ENCODE measurements at regions of chr4 and their contacts with region 1.

Region 1: DNA sequence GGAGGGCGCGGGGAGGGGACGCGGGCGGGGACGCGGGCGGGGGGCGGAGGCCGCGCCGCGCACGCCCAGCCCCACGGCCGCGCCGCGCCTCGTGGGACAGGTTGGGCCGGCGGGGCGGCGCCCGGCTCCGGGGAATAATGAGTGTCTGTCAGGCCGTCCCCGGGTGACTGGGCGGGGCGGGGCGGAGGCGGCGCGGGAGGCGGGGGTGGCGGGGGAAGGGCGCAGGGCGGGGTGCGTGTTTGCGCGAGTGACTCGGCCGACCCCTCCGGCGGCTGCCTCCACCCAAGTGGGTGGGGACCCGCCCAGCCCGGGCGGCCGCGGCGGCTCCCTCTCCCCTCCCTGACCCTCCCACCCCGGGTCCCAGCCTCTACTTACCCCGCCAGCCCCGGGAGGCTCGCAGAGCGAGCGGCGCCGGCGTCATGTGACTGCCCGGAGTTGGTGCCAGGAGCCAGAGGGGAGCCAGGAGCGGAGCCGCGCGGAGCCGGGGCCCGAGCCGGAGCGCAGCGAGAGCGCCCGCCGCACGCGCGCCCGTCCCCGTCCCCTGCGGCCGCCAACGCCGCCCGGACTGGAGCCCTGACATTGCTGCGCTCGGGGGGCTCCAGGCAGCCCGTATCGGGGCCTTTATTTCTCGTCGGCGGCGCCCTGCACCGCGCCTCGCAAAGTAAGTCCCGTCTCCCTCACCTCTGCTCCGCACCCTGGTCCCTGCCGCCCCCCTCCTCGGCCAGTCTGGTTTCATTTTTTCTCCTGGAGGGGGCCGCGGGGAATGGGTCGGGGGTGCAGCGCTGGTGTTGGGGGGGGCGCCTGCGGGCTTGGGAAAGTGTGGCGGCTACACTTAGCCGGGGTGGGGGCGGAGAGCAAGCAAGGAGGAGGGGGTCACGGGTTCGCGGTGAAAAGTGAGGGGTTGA is at the start of gene KLF3:
- DNase-seq: peak; percentile 90 to 96 (median 93)
- ATAC-seq: peak; percentile 70
- H3K4me3 ChIP-seq: peak within 1 kb of the TSS; percentile 84 to 89
- H3K4me3 Mint-ChIP-seq: peak within 1 kb of the TSS; percentile 99
- H3K27ac ChIP-seq: peak within 1 kb of the TSS; percentile 90 to 93
- H3K27ac Mint-ChIP-seq: peak within 1 kb of the TSS; percentile 98
- H3K4me1 ChIP-seq: peaks cover 61% of the 10 kb centered on the region
- H3K4me1 Mint-ChIP-seq: peaks cover 69% of the 10 kb centered on the region
- H3K27me3 ChIP-seq: no peaks in the 10 kb centered on the region
- H3K27me3 Mint-ChIP-seq: no peaks in the 10 kb centered on the region
- CTCF ChIP-seq: no peak
- total RNA-seq, gene KLF3: 181 to 194 TPM

Region 2: GRCh38 chr4:38132107-38132673 is 531.9 kb before region 1 on chr4:
- CTCF ChIA-PET with region 1: no interaction called
- POLR2A ChIA-PET with region 1: no interaction called
- intact Hi-C with region 1: loop called (anchors 5 kb)
- DNase-seq: peak; percentile 30 to 94 (median 66)
- ATAC-seq: peak; percentile 72
- H3K4me3 ChIP-seq: no peak overlapping the region
- H3K4me3 Mint-ChIP-seq: peak overlapping the region; percentile 17
- H3K27ac ChIP-seq: peak overlapping the region; percentile 25 to 66
- H3K27ac Mint-ChIP-seq: peak overlapping the region; percentile 93
- H3K4me1 ChIP-seq: peaks cover 53% of the 10 kb centered on the region
- H3K4me1 Mint-ChIP-seq: peaks cover 54% of the 10 kb centered on the region
- H3K27me3 ChIP-seq: no peaks in the 10 kb centered on the region
- H3K27me3 Mint-ChIP-seq: no peaks in the 10 kb centered on the region
- CTCF ChIP-seq: no peak

Region 3: GRCh38 chr4:38509551-38509950 is 154.5 kb before region 1 on chr4:
- CTCF ChIA-PET with region 1: interaction called, 4 read pairs
- POLR2A ChIA-PET with region 1: interaction called, 7 read pairs
- intact Hi-C with region 1: loop called in 1 of 2 experiments (anchors 2 kb)
- DNase-seq: peak; percentile 16 to 86 (median 58)
- ATAC-seq: peak; percentile 93
- H3K4me3 ChIP-seq: peak overlapping the region; percentile 52 to 54
- H3K4me3 Mint-ChIP-seq: peak overlapping the region; percentile 88
- H3K27ac ChIP-seq: peak overlapping the region; percentile 40 to 73
- H3K27ac Mint-ChIP-seq: peak overlapping the region; percentile 90
- H3K4me1 ChIP-seq: peaks cover 72% of the 10 kb centered on the region
- H3K4me1 Mint-ChIP-seq: peaks cover 90% of the 10 kb centered on the region
- H3K27me3 ChIP-seq: no peaks in the 10 kb centered on the region
- H3K27me3 Mint-ChIP-seq: no peaks in the 10 kb centered on the region
- CTCF ChIP-seq: no peak

Region 4: DNA sequence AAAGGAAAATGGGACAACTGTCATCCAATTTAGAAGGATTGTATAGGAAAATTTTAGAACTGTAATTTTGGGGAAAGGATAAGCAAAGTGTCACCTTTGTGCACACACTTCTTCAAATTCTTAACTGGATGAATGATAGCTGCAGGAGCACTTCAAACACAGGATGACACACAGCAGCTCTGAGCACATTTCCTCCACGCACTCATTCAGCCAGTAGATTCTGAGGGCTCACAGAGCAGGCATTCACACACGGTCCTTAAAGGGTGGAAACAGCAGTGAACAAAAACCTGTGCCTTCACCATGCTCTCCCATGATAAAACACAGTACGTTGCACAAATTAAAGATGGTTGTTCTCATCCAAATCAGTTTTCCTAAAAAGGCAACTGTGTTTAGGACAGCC is 38.5 kb before region 1 on chr4:
- CTCF ChIA-PET with region 1: interaction called, 4 read pairs
- POLR2A ChIA-PET with region 1: no interaction called
- intact Hi-C with region 1: loop called in 1 of 2 experiments (anchors 5 kb)
- DNase-seq: peak in 2 of 9 experiments; percentile 24 to 26
- ATAC-seq: peak; percentile 74
- H3K4me3 ChIP-seq: no peak overlapping the region
- H3K4me3 Mint-ChIP-seq: no peak overlapping the region
- H3K27ac ChIP-seq: no peak overlapping the region
- H3K27ac Mint-ChIP-seq: no peak overlapping the region
- H3K4me1 ChIP-seq: peaks cover 4% of the 10 kb centered on the region
- H3K4me1 Mint-ChIP-seq: peaks cover 16% of the 10 kb centered on the region
- H3K27me3 ChIP-seq: no peaks in the 10 kb centered on the region
- H3K27me3 Mint-ChIP-seq: no peaks in the 10 kb centered on the region
- CTCF ChIP-seq: no peak

Region 5: GRCh38 chr4:39032218-39033085 is 368.4 kb after region 1 on chr4 and contains the start of gene TMEM156:
- CTCF ChIA-PET with region 1: no interaction called
- POLR2A ChIA-PET with region 1: no interaction called
- intact Hi-C with region 1: loop called in 1 of 2 experiments (anchors 5 kb)
- DNase-seq: peak in 2 of 9 experiments; percentile 67 to 86
- ATAC-seq: peak; percentile 88
- H3K4me3 ChIP-seq: peak within 1 kb of the TSS; percentile 43 to 49
- H3K4me3 Mint-ChIP-seq: peak within 1 kb of the TSS; percentile 83
- H3K27ac ChIP-seq: peak within 1 kb of the TSS; percentile 30 to 69
- H3K27ac Mint-ChIP-seq: peak within 1 kb of the TSS; percentile 90
- H3K4me1 ChIP-seq: peaks cover 49% of the 10 kb centered on the region
- H3K4me1 Mint-ChIP-seq: peaks cover 39% of the 10 kb centered on the region
- H3K27me3 ChIP-seq: no peaks in the 10 kb centered on the region
- H3K27me3 Mint-ChIP-seq: no peaks in the 10 kb centered on the region
- CTCF ChIP-seq: no peak
- total RNA-seq, gene TMEM156: 8.4 to 9.4 TPM

Region 6: GRCh38 chr4:39205000-39205399 is 540.9 kb after region 1 on chr4:
- CTCF ChIA-PET with region 1: no interaction called
- POLR2A ChIA-PET with region 1: no interaction called
- intact Hi-C with region 1: no loop called
- DNase-seq: no peak
- ATAC-seq: no peak
- H3K4me3 ChIP-seq: no peak overlapping the region
- H3K4me3 Mint-ChIP-seq: no peak overlapping the region
- H3K27ac ChIP-seq: no peak overlapping the region
- H3K27ac Mint-ChIP-seq: no peak overlapping the region
- H3K4me1 ChIP-seq: no peaks in the 10 kb centered on the region
- H3K4me1 Mint-ChIP-seq: no peaks in the 10 kb centered on the region
- H3K27me3 ChIP-seq: no peaks in the 10 kb centered on the region
- H3K27me3 Mint-ChIP-seq: no peaks in the 10 kb centered on the region
- CTCF ChIP-seq: no peak

Region 7: GRCh38 chr4:40199999-40200874 is 1536.2 kb after region 1 on chr4:
- CTCF ChIA-PET with region 1: no interaction called
- POLR2A ChIA-PET with region 1: no interaction called
- intact Hi-C with region 1: loop called in 1 of 2 experiments (anchors 10 kb)
- DNase-seq: peak in 7 of 9 experiments; percentile 41 to 88 (median 67)
- ATAC-seq: peak; percentile 24
- H3K4me3 ChIP-seq: peak overlapping the region; percentile 83 to 87
- H3K4me3 Mint-ChIP-seq: peak overlapping the region; percentile 100
- H3K27ac ChIP-seq: peak overlapping the region; percentile 89 to 96
- H3K27ac Mint-ChIP-seq: peak overlapping the region; percentile 100
- H3K4me1 ChIP-seq: peaks cover 25% of the 10 kb centered on the region
- H3K4me1 Mint-ChIP-seq: peaks cover 41% of the 10 kb centered on the region
- H3K27me3 ChIP-seq: no peaks in the 10 kb centered on the region
- H3K27me3 Mint-ChIP-seq: no peaks in the 10 kb centered on the region
- CTCF ChIP-seq: no peak